ENCODE measurements at regions of chr14 and their contacts with region 1.

Region 1: DNA sequence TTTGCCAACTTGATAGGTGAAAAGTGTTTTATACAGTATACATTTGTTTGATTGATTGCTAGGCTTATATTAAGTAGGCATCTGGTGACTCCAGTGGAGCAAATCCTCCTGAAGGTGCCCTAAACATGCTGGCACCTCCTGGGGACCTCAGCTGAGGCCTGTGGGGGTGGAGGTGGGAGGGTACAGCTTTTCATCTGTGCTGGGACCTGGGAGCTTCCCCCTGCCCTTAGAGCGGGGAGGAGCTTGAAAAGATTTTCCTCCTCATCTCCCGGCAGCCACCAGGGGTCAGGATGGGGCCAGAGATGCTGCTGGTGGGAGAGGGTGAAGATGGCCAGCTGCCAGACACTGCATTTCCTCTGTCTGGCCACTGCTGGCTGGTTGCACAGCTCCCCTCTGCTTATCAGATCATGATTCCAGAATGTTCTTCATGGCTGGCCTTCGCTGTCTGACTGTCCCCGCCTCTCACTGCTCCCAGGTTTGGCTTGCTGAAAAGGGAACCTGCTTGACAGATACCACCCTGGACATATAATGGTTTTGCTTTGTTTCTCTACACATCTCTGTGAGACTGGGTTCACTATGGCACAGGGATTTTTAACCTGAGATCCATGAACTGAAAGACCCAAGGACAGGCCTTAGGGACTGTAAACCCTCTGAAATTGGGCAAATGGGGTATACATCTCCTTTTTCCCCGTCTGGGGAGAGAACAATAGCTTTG is 10.5 kb upstream of the JPH4 start:
- DNase-seq: peak; percentile 44
- H3K4me3 ChIP-seq: no peak overlapping the region
- CTCF ChIP-seq: peak; percentile 96

Region 2: GRCh38 chr14:23555882-23556699 is 33.0 kb before region 1 on chr14 and contains the start of gene THTPA:
- CTCF ChIA-PET with region 1: no interaction called
- POLR2A ChIA-PET with region 1: no interaction called
- DNase-seq: no peak
- H3K4me3 ChIP-seq: peak within 1 kb of the TSS; percentile 82
- CTCF ChIP-seq: no peak

Region 3: DNA sequence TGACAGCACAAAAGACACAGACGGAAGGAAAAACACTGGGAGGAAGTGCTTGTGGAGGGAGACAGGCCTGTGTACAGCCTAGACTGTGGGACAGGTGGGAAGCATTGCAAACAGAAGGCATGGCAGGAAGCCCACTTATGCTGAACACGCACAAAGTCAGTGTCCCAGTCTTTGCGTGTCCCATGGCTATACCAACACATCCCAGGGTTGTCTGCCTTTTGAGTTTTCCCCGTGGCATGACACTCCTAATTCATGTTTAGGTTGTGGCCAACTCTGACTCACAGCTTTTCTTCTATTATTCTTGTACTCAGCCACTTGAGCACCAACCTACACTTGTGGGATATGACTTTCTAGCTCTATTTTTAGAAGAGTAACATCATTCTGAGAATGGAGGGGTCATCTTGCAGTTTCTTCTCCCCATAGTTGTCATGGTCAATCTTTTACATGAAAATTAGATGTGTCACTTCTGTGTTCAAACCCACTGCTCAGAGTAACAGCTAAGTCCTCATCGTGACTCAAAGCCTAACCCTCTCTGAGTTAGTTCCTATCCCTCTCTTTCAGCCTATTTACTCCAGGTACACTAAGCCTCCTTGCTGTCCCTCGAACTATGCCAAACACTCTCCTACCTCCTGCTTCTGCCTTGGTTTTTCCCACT is 17.0 kb after region 1 on chr14:
- CTCF ChIA-PET with region 1: interaction called, 28 read pairs
- POLR2A ChIA-PET with region 1: no interaction called
- DNase-seq: no peak
- H3K4me3 ChIP-seq: no peak overlapping the region
- CTCF ChIP-seq: no peak